ENCODE measurements at regions of chr7 and their contacts with region 1.

Region 1: DNA sequence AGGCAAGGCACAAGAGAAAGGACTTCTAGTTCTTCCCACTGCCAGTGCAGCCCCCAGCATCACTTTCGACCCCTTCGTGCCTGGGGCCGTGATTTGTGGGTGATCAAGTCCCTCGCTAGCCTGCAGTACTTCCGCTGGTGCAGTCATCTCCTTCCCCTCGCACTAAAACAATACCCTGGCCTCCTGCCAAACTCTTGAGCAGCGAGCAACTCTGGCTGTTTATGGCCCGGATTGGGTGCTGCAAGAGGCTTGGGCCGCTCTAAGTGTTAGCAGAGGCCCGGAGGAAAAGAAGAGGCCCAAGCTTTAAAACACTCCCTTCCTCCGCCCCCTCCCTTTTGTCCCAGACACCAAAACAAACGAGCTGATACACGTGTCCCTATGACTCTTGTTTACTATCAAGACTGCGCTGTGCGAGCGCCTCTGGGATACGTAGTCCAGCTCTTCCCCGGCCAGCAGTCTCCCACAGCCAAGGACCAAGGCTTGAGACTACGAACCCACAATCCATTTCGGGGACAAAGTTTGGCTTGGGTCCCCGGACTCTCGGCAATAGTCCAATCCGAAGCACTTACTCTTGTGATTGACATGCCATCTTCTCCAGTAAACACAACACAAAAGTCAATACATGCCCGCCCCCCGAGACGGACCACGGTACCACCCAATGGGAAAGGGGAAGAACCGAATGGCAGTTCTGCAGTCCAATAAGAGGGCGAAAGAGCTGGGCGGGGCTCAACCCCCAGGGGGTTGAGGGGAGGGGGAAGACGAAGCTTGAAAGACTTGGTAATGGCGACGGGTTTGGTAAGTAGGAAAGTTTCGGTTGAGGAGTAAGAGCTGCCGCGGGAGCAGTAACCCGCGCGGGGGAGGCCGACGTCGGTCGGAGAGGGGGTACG is at the start of gene HBP1:
- DNase-seq: peak; percentile 95 to 100 (median 96)
- ATAC-seq: peak; percentile 76
- H3K4me3 ChIP-seq: peak within 1 kb of the TSS; percentile 87
- H3K4me3 Mint-ChIP-seq: peak within 1 kb of the TSS; percentile 99
- H3K27ac ChIP-seq: peak within 1 kb of the TSS; percentile 98 to 99
- H3K27ac Mint-ChIP-seq: peak within 1 kb of the TSS; percentile 98
- H3K4me1 ChIP-seq: peaks cover 20% of the 10 kb centered on the region
- H3K4me1 Mint-ChIP-seq: peaks cover 51% of the 10 kb centered on the region
- H3K27me3 ChIP-seq: no peaks in the 10 kb centered on the region
- H3K27me3 Mint-ChIP-seq: no peaks in the 10 kb centered on the region
- CTCF ChIP-seq: no peak
- total RNA-seq, gene HBP1: 238 to 242 TPM

Region 2: GRCh38 chr7:105691733-105692564 is 1476.5 kb before region 1 on chr7:
- CTCF ChIA-PET with region 1: no interaction called
- POLR2A ChIA-PET with region 1: interaction called, 17 read pairs
- intact Hi-C with region 1: no loop called
- DNase-seq: peak; percentile 50 to 94 (median 68)
- ATAC-seq: peak; percentile 82
- H3K4me3 ChIP-seq: peak overlapping the region; percentile 92
- H3K4me3 Mint-ChIP-seq: peak overlapping the region; percentile 87
- H3K27ac ChIP-seq: peak overlapping the region; percentile 94 to 97
- H3K27ac Mint-ChIP-seq: peak overlapping the region; percentile 98
- H3K4me1 ChIP-seq: peaks cover 53% of the 10 kb centered on the region
- H3K4me1 Mint-ChIP-seq: peaks cover 62% of the 10 kb centered on the region
- H3K27me3 ChIP-seq: no peaks in the 10 kb centered on the region
- H3K27me3 Mint-ChIP-seq: no peaks in the 10 kb centered on the region
- CTCF ChIP-seq: no peak

Region 3: GRCh38 chr7:106659963-106660861 is 508.3 kb before region 1 on chr7:
- CTCF ChIA-PET with region 1: no interaction called
- POLR2A ChIA-PET with region 1: interaction called, 26 read pairs
- intact Hi-C with region 1: loop called in 1 of 2 experiments (anchors 2 kb)
- DNase-seq: peak; percentile 58 to 91 (median 72)
- ATAC-seq: peak; percentile 58
- H3K4me3 ChIP-seq: peak overlapping the region; percentile 71
- H3K4me3 Mint-ChIP-seq: peak overlapping the region; percentile 96
- H3K27ac ChIP-seq: peak overlapping the region; percentile 44 to 71
- H3K27ac Mint-ChIP-seq: peak overlapping the region; percentile 92
- H3K4me1 ChIP-seq: peaks cover 20% of the 10 kb centered on the region
- H3K4me1 Mint-ChIP-seq: peaks cover 40% of the 10 kb centered on the region
- H3K27me3 ChIP-seq: no peaks in the 10 kb centered on the region
- H3K27me3 Mint-ChIP-seq: no peaks in the 10 kb centered on the region
- CTCF ChIP-seq: peak; percentile 78

Region 4: GRCh38 chr7:107122486-107122911 is 46.0 kb before region 1 on chr7:
- CTCF ChIA-PET with region 1: no interaction called
- POLR2A ChIA-PET with region 1: interaction called, 73 read pairs
- intact Hi-C with region 1: loop called in 1 of 2 experiments (anchors 2 kb)
- DNase-seq: no peak
- ATAC-seq: no peak
- H3K4me3 ChIP-seq: no peak overlapping the region
- H3K4me3 Mint-ChIP-seq: no peak overlapping the region
- H3K27ac ChIP-seq: no peak overlapping the region
- H3K27ac Mint-ChIP-seq: no peak overlapping the region
- H3K4me1 ChIP-seq: peaks cover 15% of the 10 kb centered on the region
- H3K4me1 Mint-ChIP-seq: peaks cover 21% of the 10 kb centered on the region
- H3K27me3 ChIP-seq: no peaks in the 10 kb centered on the region
- H3K27me3 Mint-ChIP-seq: no peaks in the 10 kb centered on the region
- CTCF ChIP-seq: no peak

Region 5: GRCh38 chr7:107187774-107188173 is 19.3 kb after region 1 on chr7:
- CTCF ChIA-PET with region 1: interaction called, 5 read pairs
- POLR2A ChIA-PET with region 1: interaction called, 82 read pairs
- intact Hi-C with region 1: no loop called
- DNase-seq: no peak
- ATAC-seq: no peak
- H3K4me3 ChIP-seq: no peak overlapping the region
- H3K4me3 Mint-ChIP-seq: no peak overlapping the region
- H3K27ac ChIP-seq: no peak overlapping the region
- H3K27ac Mint-ChIP-seq: no peak overlapping the region
- H3K4me1 ChIP-seq: no peaks in the 10 kb centered on the region
- H3K4me1 Mint-ChIP-seq: peaks cover 43% of the 10 kb centered on the region
- H3K27me3 ChIP-seq: no peaks in the 10 kb centered on the region
- H3K27me3 Mint-ChIP-seq: no peaks in the 10 kb centered on the region
- CTCF ChIP-seq: no peak

Region 6: DNA sequence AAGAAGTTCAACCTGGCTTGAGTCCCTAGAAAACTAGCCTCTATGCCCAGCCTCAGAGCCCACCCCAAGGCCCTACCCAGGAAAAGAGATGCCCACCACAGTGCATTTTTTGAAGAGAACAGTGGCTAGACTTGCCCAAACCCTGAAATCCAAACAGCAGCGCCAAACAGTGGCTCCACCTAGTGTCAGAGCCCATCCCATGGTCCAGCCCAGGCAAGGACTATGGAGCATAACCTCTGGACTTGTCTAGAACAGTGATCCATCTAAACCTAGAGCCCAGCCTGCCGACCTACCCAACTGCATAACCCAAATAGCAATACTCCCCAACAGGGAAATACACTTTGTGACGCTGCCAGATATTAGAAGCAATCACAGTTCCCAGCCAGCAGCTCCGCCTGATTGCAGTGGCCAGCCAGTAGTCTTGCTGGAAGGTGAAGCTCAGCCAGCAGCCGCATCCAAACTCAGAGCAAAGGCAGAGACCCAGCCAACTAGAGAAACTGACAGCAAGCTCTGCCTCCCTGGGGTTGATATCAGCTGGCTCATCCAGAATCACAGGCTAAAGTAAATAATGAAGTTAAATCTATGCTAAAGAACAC is 44.8 kb after region 1 on chr7:
- CTCF ChIA-PET with region 1: no interaction called
- POLR2A ChIA-PET with region 1: interaction called, 21 read pairs
- intact Hi-C with region 1: no loop called
- DNase-seq: no peak
- ATAC-seq: no peak
- H3K4me3 ChIP-seq: no peak overlapping the region
- H3K4me3 Mint-ChIP-seq: no peak overlapping the region
- H3K27ac ChIP-seq: no peak overlapping the region
- H3K27ac Mint-ChIP-seq: no peak overlapping the region
- H3K4me1 ChIP-seq: no peaks in the 10 kb centered on the region
- H3K4me1 Mint-ChIP-seq: no peaks in the 10 kb centered on the region
- H3K27me3 ChIP-seq: no peaks in the 10 kb centered on the region
- H3K27me3 Mint-ChIP-seq: no peaks in the 10 kb centered on the region
- CTCF ChIP-seq: no peak

Region 7: GRCh38 chr7:107890962-107891635 is 722.6 kb after region 1 on chr7 and contains the start of gene DLD:
- CTCF ChIA-PET with region 1: no interaction called
- POLR2A ChIA-PET with region 1: interaction called, 23 read pairs
- intact Hi-C with region 1: loop called in 1 of 2 experiments (anchors 5 kb)
- DNase-seq: peak; percentile 84 to 97 (median 90)
- ATAC-seq: peak; percentile 96
- H3K4me3 ChIP-seq: peak within 1 kb of the TSS; percentile 78
- H3K4me3 Mint-ChIP-seq: peak within 1 kb of the TSS; percentile 99
- H3K27ac ChIP-seq: peak within 1 kb of the TSS; percentile 85 to 89
- H3K27ac Mint-ChIP-seq: peak within 1 kb of the TSS; percentile 95
- H3K4me1 ChIP-seq: peaks cover 27% of the 10 kb centered on the region
- H3K4me1 Mint-ChIP-seq: peaks cover 54% of the 10 kb centered on the region
- H3K27me3 ChIP-seq: no peaks in the 10 kb centered on the region
- H3K27me3 Mint-ChIP-seq: no peaks in the 10 kb centered on the region
- CTCF ChIP-seq: no peak
- total RNA-seq, gene DLD: 74.3 to 74.9 TPM